K562 (cell line): ENCODE measurements at regions of chr12 and their contacts with region 1.

Region 1: GRCh38 chr12:50314629-50315312 is 31.5 kb upstream of the LIMA1 start:
- DNase-seq: peak; percentile 45 to 58 (median 52)
- ATAC-seq: 0 out of 3 replicates have a peak, but pooled peaks have one; percentile 47
- H3K4me3 ChIP-seq: no peak overlapping the region
- H3K27ac ChIP-seq: no peak overlapping the region
- H3K4me1 ChIP-seq: peaks cover 7 to 13% of the 10 kb centered on the region in 2 experiments; a peak in 3 of 5 replicates
- H3K27me3 ChIP-seq: no peaks in the 10 kb centered on the region
- CTCF ChIP-seq: peak; percentile 60 to 83 (median 69); a peak in 5 of 6 replicates
- EP300 ChIP-seq: no peak
- POLR2A ChIP-seq: no peak
- RAD21 ChIP-seq: peak; percentile 77 to 97

Region 2: DNA sequence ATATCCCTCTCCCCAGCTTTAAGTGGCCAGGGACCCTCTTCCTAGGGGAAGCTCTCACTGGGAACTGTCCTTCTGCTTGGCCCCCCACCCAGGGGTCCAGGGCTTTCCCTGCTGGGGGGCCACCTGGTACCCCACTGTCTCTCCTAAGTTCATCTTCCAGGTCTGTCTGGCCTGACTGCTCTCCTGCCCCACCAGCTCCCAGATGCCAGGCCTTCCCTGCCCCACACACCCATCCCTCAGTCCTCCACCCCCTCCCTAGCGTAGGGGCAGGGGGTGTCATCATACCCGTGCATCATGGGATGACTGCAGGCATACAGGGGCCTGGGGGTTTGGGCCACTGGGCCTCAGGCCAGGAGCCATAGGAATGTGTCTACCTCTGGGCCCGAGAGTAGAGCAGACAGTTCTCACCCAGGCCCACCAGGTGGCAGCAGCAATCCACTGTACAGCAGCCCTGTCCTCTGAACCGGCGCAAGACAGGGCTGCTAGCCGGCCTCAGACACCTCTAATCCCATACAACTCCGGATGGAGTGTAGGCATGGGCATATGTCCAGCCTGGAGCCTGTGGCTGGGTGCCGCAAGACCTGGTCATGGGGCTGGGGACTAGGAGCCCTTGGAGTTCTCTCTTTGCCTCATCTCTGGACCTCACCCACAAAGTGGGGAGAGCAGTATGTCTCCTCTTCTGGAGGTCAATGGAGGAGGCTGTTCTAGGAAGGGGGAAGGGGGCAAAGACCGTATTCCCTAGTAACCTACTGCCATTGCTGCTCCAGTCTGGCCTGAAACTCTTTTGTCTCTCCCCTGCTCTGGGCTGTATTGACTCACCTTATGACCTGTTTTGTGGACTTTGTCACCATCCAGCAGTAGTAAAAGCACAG is 239.6 kb before region 1 on chr12:
- CTCF ChIA-PET with region 1: interaction called, 3 read pairs
- POLR2A ChIA-PET with region 1: interaction called, 3 read pairs
- in situ Hi-C with region 1: loop called (anchors 5 kb)
- intact Hi-C with region 1: loop called (anchors 1 kb)
- DNase-seq: peak; percentile 82 to 89 (median 82)
- ATAC-seq: peak; percentile 94
- H3K4me3 ChIP-seq: no peak overlapping the region
- H3K27ac ChIP-seq: no peak overlapping the region
- H3K4me1 ChIP-seq: peaks cover 23 to 24% of the 10 kb centered on the region in 2 experiments; a peak in 4 of 5 replicates
- H3K27me3 ChIP-seq: no peaks in the 10 kb centered on the region
- CTCF ChIP-seq: peak; percentile 90 to 95 (median 94)
- EP300 ChIP-seq: no peak
- POLR2A ChIP-seq: no peak
- RAD21 ChIP-seq: peak; percentile 91 to 97

Region 3: DNA sequence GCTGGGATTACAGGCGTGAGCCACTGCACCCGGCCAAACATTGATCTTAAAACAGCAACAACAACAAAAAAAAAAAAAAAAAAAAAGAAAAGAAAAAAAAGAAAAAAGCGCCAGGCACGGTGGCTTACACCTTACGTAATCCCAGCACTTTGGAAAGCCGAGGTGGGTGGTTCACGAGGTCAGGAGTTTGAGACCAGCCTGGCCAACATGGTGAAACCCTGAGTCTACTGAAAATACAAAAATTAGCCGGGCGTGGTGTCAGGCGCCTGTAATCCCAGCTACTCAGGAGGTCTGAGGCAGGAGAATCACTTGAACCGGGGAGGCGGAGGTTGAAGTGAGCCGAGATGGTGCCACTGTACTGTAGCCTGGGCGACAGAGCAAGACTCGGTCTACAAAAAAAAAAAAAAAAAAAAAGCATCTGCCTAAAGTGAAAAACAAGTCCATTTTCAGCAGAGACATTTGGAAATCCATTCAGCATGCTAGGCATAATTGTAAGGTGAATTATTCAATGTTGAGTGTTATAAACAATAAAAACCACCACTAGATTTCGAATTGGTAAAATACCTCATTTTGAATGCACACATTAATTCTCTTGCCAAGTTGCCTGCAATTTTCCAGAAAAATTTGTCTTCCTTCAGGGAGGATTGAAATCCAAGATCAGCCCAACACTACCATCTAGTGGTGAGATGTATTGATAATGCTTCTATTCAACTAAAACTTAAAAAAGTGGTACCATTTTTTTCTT is 139.6 kb before region 1 on chr12:
- CTCF ChIA-PET with region 1: interaction called, 3 read pairs
- POLR2A ChIA-PET with region 1: interaction called, 6 read pairs
- in situ Hi-C with region 1: loop called (anchors 5 kb)
- intact Hi-C with region 1: loop called (anchors 2 kb)
- DNase-seq: peak; percentile 51 to 82 (median 54)
- ATAC-seq: peak; percentile 64
- H3K4me3 ChIP-seq: no peak overlapping the region
- H3K27ac ChIP-seq: no peak overlapping the region
- H3K4me1 ChIP-seq: no peaks in the 10 kb centered on the region
- H3K27me3 ChIP-seq: no peaks in the 10 kb centered on the region
- CTCF ChIP-seq: peak; percentile 52 to 87 (median 54); a peak in 5 of 6 replicates
- EP300 ChIP-seq: no peak
- POLR2A ChIP-seq: no peak
- RAD21 ChIP-seq: peak; percentile 92 to 94

Region 4: GRCh38 chr12:50182461-50182860 is 132.3 kb before region 1 on chr12:
- CTCF ChIA-PET with region 1: interaction called, 44 read pairs
- POLR2A ChIA-PET with region 1: interaction called, 3 read pairs
- in situ Hi-C with region 1: loop called (anchors 5 kb)
- intact Hi-C with region 1: loop called (anchors 2 kb)
- DNase-seq: no peak
- ATAC-seq: no peak
- H3K4me3 ChIP-seq: no peak overlapping the region
- H3K27ac ChIP-seq: no peak overlapping the region
- H3K4me1 ChIP-seq: no peaks in the 10 kb centered on the region
- H3K27me3 ChIP-seq: no peaks in the 10 kb centered on the region
- CTCF ChIP-seq: peak in 1 of 3 experiments; percentile 48; a peak in 2 of 6 replicates
- EP300 ChIP-seq: no peak
- POLR2A ChIP-seq: no peak
- RAD21 ChIP-seq: peak; percentile 54 to 67

Region 5: GRCh38 chr12:50261654-50262053 is 53.1 kb before region 1 on chr12:
- CTCF ChIA-PET with region 1: interaction called, 5 read pairs
- POLR2A ChIA-PET with region 1: no interaction called
- in situ Hi-C with region 1: no loop called
- intact Hi-C with region 1: loop called (anchors 5 kb)
- DNase-seq: peak in 1 of 4 experiments; percentile 38
- ATAC-seq: peak; percentile 72
- H3K4me3 ChIP-seq: no peak overlapping the region
- H3K27ac ChIP-seq: no peak overlapping the region
- H3K4me1 ChIP-seq: peaks cover 10% of the 10 kb centered on the region in 2 experiments; a peak in 3 of 5 replicates
- H3K27me3 ChIP-seq: no peaks in the 10 kb centered on the region
- CTCF ChIP-seq: peak; percentile 23 to 58 (median 26); a peak in 3 of 6 replicates
- EP300 ChIP-seq: no peak
- POLR2A ChIP-seq: no peak
- RAD21 ChIP-seq: peak in 1 of 2 experiments; percentile 58; a peak in 2 of 4 replicates

Region 6: GRCh38 chr12:50504798-50505385 is 190.1 kb after region 1 on chr12 and contains the start of gene DIP2B:
- CTCF ChIA-PET with region 1: no interaction called
- POLR2A ChIA-PET with region 1: no interaction called
- in situ Hi-C with region 1: no loop called
- intact Hi-C with region 1: no loop called
- DNase-seq: peak; percentile 92 to 96 (median 95)
- ATAC-seq: peak; percentile 94
- H3K4me3 ChIP-seq: peak within 1 kb of the TSS; percentile 94
- H3K27ac ChIP-seq: peak within 1 kb of the TSS; percentile 86
- H3K4me1 ChIP-seq: peaks cover 22 to 23% of the 10 kb centered on the region in 2 experiments
- H3K27me3 ChIP-seq: no peaks in the 10 kb centered on the region
- CTCF ChIP-seq: peak; percentile 86 to 95 (median 88)
- EP300 ChIP-seq: no peak
- POLR2A ChIP-seq: peak; percentile 78
- RAD21 ChIP-seq: peak; percentile 97
- polyA plus RNA-seq, gene DIP2B: 4.6 to 5.8 TPM